Psoas muscle (tissue), 8 donors: ENCODE measurements at regions of chr1 and their contacts with region 1.

Region 1: GRCh38 chr1:19251305-19252196 is at the starts of genes EMC1 and MRTO4:
- DNase-seq: peak; percentile 91 to 93
- ATAC-seq: peak; percentile 95 to 97 (median 96)
- H3K4me3 ChIP-seq: peak within 1 kb of the TSS; percentile 93
- H3K27ac ChIP-seq: peak within 1 kb of the TSS; percentile 95
- H3K4me1 ChIP-seq: peaks cover 21% of the 10 kb centered on the region
- H3K27me3 ChIP-seq: no peaks in the 10 kb centered on the region
- CTCF ChIP-seq: no peak
- total RNA-seq, gene EMC1: 31.1 to 38.5 (median 35.1) TPM
- total RNA-seq, gene MRTO4: 19.9 to 35.8 (median 28.8) TPM

Region 2: GRCh38 chr1:19311959-19312781 is 60.6 kb after region 1 on chr1 and contains the starts of genes AKR7A2 and SLC66A1:
- intact Hi-C with region 1: loop called in 1 of 2 experiments (anchors 5 kb)
- DNase-seq: peak; percentile 95 to 97
- ATAC-seq: peak; percentile 96 to 97 (median 96)
- H3K4me3 ChIP-seq: peak within 1 kb of the TSS; percentile 97
- H3K27ac ChIP-seq: peak within 1 kb of the TSS; percentile 99
- H3K4me1 ChIP-seq: peaks cover 28% of the 10 kb centered on the region
- H3K27me3 ChIP-seq: no peaks in the 10 kb centered on the region
- CTCF ChIP-seq: peak; percentile 7
- total RNA-seq, gene AKR7A2: 30.3 to 52.2 (median 36.3) TPM
- total RNA-seq, gene SLC66A1: 8.0 to 18.0 (median 10.1) TPM

Region 3: DNA sequence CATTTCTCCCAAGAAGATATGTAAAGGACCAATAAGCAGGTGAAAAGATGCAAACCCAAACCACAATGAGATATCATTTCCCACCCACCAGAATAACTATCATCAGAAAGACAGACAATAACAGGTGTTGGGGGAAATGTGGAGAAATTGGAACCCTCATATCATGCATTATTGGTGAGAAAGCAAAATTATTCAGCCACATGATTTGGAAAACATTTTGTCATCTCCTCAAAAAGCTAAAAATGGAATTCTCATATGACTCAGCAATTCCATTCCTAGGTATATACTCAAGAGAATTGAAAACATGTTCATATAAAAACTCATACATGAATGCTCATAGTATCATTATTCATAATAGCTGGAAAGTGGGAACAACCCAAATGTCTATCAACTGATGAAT is 588.7 kb after region 1 on chr1:
- intact Hi-C with region 1: no loop called
- DNase-seq: no peak
- ATAC-seq: no peak
- H3K4me3 ChIP-seq: no peak overlapping the region
- H3K27ac ChIP-seq: no peak overlapping the region
- H3K4me1 ChIP-seq: no peaks in the 10 kb centered on the region
- H3K27me3 ChIP-seq: no peaks in the 10 kb centered on the region
- CTCF ChIP-seq: no peak